ENCODE measurements at regions of chr6 and their contacts with region 1.

Region 1: GRCh38 chr6:15879382-15880261 is 216.8 kb upstream of the DTNBP1 start:
- DNase-seq: peak in 34 of 35 experiments; percentile 8 to 60 (median 42)
- ATAC-seq: peak; percentile 52 to 81 (median 66)
- H3K4me3 ChIP-seq: no peak overlapping the region
- H3K4me3 Mint-ChIP-seq: no peak overlapping the region
- H3K27ac ChIP-seq: no peak overlapping the region
- H3K27ac Mint-ChIP-seq: peak overlapping the region in 1 of 2 donors; percentile 68
- H3K4me1 ChIP-seq: peaks cover 0 to 10% of the 10 kb centered on the region in 2 experiments
- H3K4me1 Mint-ChIP-seq: peaks cover 7 to 24% (median 17%) of the 10 kb centered on the region in 3 donors
- H3K27me3 ChIP-seq: peaks cover 0 to 3% of the 10 kb centered on the region in 2 experiments
- H3K27me3 Mint-ChIP-seq: peaks cover 0 to 2% of the 10 kb centered on the region in 2 donors

Region 2: DNA sequence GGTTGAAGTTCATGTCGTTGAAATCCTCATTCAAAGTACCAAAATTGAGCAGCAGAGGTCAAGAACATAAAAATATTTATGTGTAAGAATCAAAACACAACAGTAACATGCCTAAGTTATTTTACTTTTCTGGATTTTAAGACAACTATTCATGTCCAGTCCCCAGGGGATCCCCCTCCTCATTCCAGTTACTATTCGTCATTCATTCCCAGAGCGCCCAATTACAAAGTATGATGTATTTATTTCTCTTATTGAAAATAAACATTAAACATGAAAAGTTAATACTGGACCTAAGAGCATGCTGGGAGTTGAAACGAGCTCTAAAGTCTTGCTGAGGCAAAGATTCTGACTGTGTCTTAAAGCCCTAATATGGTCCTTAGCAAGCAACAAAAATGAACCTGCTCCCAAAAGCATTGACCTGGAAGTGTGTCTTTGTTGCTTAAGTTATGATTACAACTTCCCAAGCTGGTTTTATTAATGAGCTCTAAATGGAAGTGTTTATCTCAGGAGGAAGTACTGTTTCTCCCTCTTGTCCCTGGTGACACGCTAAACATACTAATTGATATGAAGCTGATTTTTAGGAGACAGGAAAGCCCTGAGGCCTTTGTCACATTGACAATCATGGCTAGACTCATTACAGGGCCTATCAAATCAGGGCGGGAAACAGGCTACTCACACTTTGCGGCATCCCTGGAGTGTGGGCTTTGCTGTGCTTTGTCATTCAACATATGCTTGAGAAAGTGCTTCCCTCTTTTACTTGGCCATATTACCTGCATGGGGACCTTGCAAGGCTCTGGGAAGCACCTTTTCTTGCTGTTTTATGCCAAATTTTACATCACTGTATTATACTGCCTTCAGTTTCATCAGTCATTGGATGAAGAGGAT is 24.6 kb before region 1 on chr6:
- CTCF ChIA-PET with region 1: no interaction called
- POLR2A ChIA-PET with region 1: no interaction called
- DNase-seq: no peak
- ATAC-seq: no peak
- H3K4me3 ChIP-seq: no peak overlapping the region
- H3K4me3 Mint-ChIP-seq: no peak overlapping the region
- H3K27ac ChIP-seq: no peak overlapping the region
- H3K27ac Mint-ChIP-seq: no peak overlapping the region
- H3K4me1 ChIP-seq: no peaks in the 10 kb centered on the region
- H3K4me1 Mint-ChIP-seq: no peaks in the 10 kb centered on the region
- H3K27me3 ChIP-seq: peaks cover 0 to 4% of the 10 kb centered on the region in 2 experiments
- H3K27me3 Mint-ChIP-seq: peaks cover 0 to 5% of the 10 kb centered on the region in 2 donors

Region 3: GRCh38 chr6:16004934-16005679 is 125.5 kb after region 1 on chr6:
- CTCF ChIA-PET with region 1: no interaction called
- POLR2A ChIA-PET with region 1: no interaction called
- DNase-seq: no peak
- ATAC-seq: no peak
- H3K4me3 ChIP-seq: no peak overlapping the region
- H3K4me3 Mint-ChIP-seq: no peak overlapping the region
- H3K27ac ChIP-seq: no peak overlapping the region
- H3K27ac Mint-ChIP-seq: no peak overlapping the region
- H3K4me1 ChIP-seq: no peaks in the 10 kb centered on the region
- H3K4me1 Mint-ChIP-seq: no peaks in the 10 kb centered on the region
- H3K27me3 ChIP-seq: no peaks in the 10 kb centered on the region
- H3K27me3 Mint-ChIP-seq: peaks cover 2 to 13% of the 10 kb centered on the region in 2 donors

Region 4: DNA sequence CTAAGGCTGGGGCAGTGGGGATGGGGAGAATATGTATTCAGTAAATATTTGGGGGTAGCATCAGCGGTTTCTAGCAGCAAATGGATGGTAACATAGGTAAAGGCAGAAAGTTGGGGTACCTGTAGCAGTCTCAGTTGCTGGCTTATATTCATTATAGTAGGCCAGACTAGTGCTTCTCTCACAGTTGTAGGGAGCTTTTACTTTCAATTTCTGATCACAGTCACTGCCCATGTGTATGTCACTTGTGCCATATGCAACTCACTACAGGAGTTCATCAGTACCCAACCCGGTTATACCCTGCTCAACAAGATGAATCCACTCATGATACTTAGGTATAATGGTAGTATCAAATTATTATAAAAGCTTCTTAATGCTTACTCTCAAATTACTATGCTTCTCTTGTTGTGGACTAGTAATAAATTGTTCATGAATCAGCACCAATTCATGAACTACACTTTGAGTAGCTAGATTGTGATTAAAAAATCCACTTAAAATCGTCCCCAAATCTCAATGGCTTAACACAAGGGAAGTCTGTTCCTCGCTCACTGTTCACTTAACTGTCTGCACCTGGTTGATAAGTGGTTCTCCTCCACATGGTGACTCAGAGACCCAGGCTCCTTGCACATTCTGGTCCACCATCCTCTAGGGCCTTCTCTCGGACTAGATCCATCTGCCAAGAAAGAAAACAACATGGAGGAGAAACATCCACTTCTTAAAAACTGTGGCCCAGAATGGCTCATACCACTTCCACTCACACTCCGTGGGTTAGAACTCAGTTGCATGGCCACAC is 218.0 kb after region 1 on chr6:
- CTCF ChIA-PET with region 1: no interaction called
- POLR2A ChIA-PET with region 1: interaction called in 1 of 2 experiments, 13 read pairs
- DNase-seq: no peak
- ATAC-seq: no peak
- H3K4me3 ChIP-seq: no peak overlapping the region
- H3K4me3 Mint-ChIP-seq: no peak overlapping the region
- H3K27ac ChIP-seq: no peak overlapping the region
- H3K27ac Mint-ChIP-seq: no peak overlapping the region
- H3K4me1 ChIP-seq: no peaks in the 10 kb centered on the region
- H3K4me1 Mint-ChIP-seq: no peaks in the 10 kb centered on the region
- H3K27me3 ChIP-seq: no peaks in the 10 kb centered on the region
- H3K27me3 Mint-ChIP-seq: peaks cover 3 to 4% of the 10 kb centered on the region in 2 donors

Region 5: DNA sequence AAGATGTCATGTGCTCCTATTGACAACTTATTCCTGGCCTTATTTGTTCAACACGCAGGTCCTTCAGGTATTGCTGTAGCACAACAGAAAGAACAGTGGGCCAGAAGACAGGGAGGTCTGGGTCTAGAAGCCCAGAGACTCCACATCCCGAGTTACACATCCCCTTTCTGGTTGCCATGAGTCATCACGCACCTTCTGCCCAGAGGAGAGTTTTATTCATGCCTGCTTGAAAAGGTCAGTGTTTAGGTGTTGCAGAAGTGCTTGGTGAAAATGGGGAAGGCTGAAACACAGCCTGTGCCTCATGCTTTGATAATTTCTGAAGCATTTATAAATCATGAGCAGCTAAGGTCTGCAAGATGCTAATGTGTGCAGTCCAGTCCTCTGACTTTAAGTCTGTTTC is 615.2 kb after region 1 on chr6:
- CTCF ChIA-PET with region 1: no interaction called
- POLR2A ChIA-PET with region 1: no interaction called
- DNase-seq: no peak
- ATAC-seq: no peak
- H3K4me3 ChIP-seq: no peak overlapping the region
- H3K4me3 Mint-ChIP-seq: no peak overlapping the region
- H3K27ac ChIP-seq: no peak overlapping the region
- H3K27ac Mint-ChIP-seq: peak overlapping the region in 1 of 2 donors; percentile 41
- H3K4me1 ChIP-seq: peaks cover 7 to 12% of the 10 kb centered on the region in 2 experiments
- H3K4me1 Mint-ChIP-seq: peaks cover 36 to 50% (median 50%) of the 10 kb centered on the region in 3 donors
- H3K27me3 ChIP-seq: no peaks in the 10 kb centered on the region
- H3K27me3 Mint-ChIP-seq: no peaks in the 10 kb centered on the region